Aorta (tissue), 5 donors: ENCODE measurements at regions of chr11 and their contacts with region 1.

Region 1: GRCh38 chr11:1832211-1832919 is 2.4 kb upstream of the SYT8 start:
- DNase-seq: peak; percentile 77 to 91
- ATAC-seq: peak; percentile 64
- H3K4me3 ChIP-seq: no peak overlapping the region
- H3K27ac ChIP-seq: no peak overlapping the region
- H3K4me1 ChIP-seq: no peaks in the 10 kb centered on the region
- H3K27me3 ChIP-seq: no peaks in the 10 kb centered on the region

Region 2: DNA sequence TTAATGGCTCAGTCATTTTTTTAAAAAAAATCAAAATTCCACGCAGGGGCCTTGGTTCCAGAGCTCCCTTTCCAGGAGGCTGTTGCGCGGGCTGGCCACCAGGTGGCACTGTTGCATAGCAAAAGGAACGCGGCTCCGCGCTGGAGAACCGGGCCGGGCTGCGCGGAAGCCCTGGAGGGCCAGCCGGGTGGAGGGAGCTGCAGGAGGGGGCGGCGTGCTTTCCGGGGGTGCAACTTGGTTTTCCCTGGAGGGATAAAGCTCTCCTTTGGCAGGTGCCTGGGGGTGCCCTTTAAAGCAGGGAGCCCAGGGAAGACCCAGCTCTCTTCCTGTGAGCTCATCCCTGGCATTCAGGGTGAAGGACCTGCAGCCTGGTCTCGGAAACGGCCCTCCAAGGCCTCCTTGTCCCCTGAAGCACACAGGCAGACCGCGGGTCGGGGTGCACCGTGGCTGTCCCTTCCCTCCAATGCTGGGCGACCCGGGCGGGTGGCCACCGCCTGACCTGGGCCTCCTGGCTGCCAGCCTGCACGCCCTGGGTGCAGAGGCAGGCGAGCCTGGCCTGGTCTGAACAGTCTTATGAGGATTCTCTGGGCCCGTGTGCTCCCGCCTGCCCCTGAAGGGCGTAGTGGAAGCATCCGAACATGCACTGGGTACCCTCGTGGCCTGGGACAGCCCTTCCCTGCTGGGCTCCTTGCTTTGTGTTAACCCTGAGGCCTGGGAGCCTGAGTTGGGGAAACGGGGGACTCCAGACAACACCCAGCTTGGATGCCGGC is 179.4 kb before region 1 on chr11:
- intact Hi-C with region 1: loop called in 1 of 2 experiments (anchors 5 kb)
- DNase-seq: peak; percentile 78 to 94
- ATAC-seq: peak; percentile 92
- H3K4me3 ChIP-seq: no peak overlapping the region
- H3K27ac ChIP-seq: no peak overlapping the region
- H3K4me1 ChIP-seq: no peaks in the 10 kb centered on the region
- H3K27me3 ChIP-seq: no peaks in the 10 kb centered on the region